Activated CD4-positive, alpha-beta T cell treated with anti-CD3 and anti-CD28 coated beads, Interleukin-2, amount 10 ng/mL, durations not matched to agents 7 days and 5 days (primary cell): ENCODE measurements at regions of chr16 and their contacts with region 1.

Region 1: GRCh38 chr16:67546761-67547422 is 15.4 kb upstream of the CTCF start:
- DNase-seq: peak; percentile 78
- H3K4me3 Mint-ChIP-seq: peak overlapping the region; percentile 55
- H3K27ac Mint-ChIP-seq: peak overlapping the region; percentile 97
- H3K4me1 Mint-ChIP-seq: peaks cover 66% of the 10 kb centered on the region
- H3K27me3 Mint-ChIP-seq: no peaks in the 10 kb centered on the region

Region 2: GRCh38 chr16:66026211-66026610 is 1520.7 kb before region 1 on chr16:
- CTCF ChIA-PET with region 1: no interaction called
- POLR2A ChIA-PET with region 1: no interaction called
- DNase-seq: no peak
- H3K4me3 Mint-ChIP-seq: no peak overlapping the region
- H3K27ac Mint-ChIP-seq: no peak overlapping the region
- H3K4me1 Mint-ChIP-seq: no peaks in the 10 kb centered on the region
- H3K27me3 Mint-ChIP-seq: no peaks in the 10 kb centered on the region

Region 3: GRCh38 chr16:67530013-67530939 is 16.6 kb before region 1 on chr16:
- CTCF ChIA-PET with region 1: interaction called, 23 read pairs
- POLR2A ChIA-PET with region 1: interaction called, 3 read pairs
- DNase-seq: peak; percentile 23
- H3K4me3 Mint-ChIP-seq: peak overlapping the region; percentile 64
- H3K27ac Mint-ChIP-seq: no peak overlapping the region
- H3K4me1 Mint-ChIP-seq: peaks cover 24% of the 10 kb centered on the region
- H3K27me3 Mint-ChIP-seq: peaks cover 59% of the 10 kb centered on the region

Region 4: GRCh38 chr16:67561824-67562525 is 15.1 kb after region 1 on chr16:
- CTCF ChIA-PET with region 1: interaction called, 93 read pairs
- POLR2A ChIA-PET with region 1: interaction called, 7 read pairs
- DNase-seq: peak; percentile 99
- H3K4me3 Mint-ChIP-seq: peak overlapping the region; percentile 87
- H3K27ac Mint-ChIP-seq: peak overlapping the region; percentile 97
- H3K4me1 Mint-ChIP-seq: peaks cover 47% of the 10 kb centered on the region
- H3K27me3 Mint-ChIP-seq: no peaks in the 10 kb centered on the region

Region 5: GRCh38 chr16:67641779-67642708 is 95.2 kb after region 1 on chr16:
- CTCF ChIA-PET with region 1: interaction called, 80 read pairs
- POLR2A ChIA-PET with region 1: interaction called, 10 read pairs
- DNase-seq: no peak
- H3K4me3 Mint-ChIP-seq: no peak overlapping the region
- H3K27ac Mint-ChIP-seq: no peak overlapping the region
- H3K4me1 Mint-ChIP-seq: peaks cover 16% of the 10 kb centered on the region
- H3K27me3 Mint-ChIP-seq: no peaks in the 10 kb centered on the region

Region 6: GRCh38 chr16:67667817-67668494 is 121.1 kb after region 1 on chr16:
- CTCF ChIA-PET with region 1: interaction called, 29 read pairs
- POLR2A ChIA-PET with region 1: no interaction called
- DNase-seq: peak; percentile 89
- H3K4me3 Mint-ChIP-seq: peak overlapping the region; percentile 84
- H3K27ac Mint-ChIP-seq: peak overlapping the region; percentile 41
- H3K4me1 Mint-ChIP-seq: peaks cover 37% of the 10 kb centered on the region
- H3K27me3 Mint-ChIP-seq: no peaks in the 10 kb centered on the region